ENCODE measurements at regions of chr19 and their contacts with region 1.

Region 1: GRCh38 chr19:40633207-40633606 is 32.0 kb downstream of the LTBP4 start:
- DNase-seq: no peak
- ATAC-seq: no peak
- H3K4me3 ChIP-seq: no peak overlapping the region
- H3K27ac ChIP-seq: no peak overlapping the region
- H3K4me1 ChIP-seq: no peaks in the 10 kb centered on the region
- H3K27me3 ChIP-seq: no peaks in the 10 kb centered on the region
- CTCF ChIP-seq: no peak
- EP300 ChIP-seq: no peak
- POLR2A ChIP-seq: no peak
- RAD21 ChIP-seq: no peak

Region 2: DNA sequence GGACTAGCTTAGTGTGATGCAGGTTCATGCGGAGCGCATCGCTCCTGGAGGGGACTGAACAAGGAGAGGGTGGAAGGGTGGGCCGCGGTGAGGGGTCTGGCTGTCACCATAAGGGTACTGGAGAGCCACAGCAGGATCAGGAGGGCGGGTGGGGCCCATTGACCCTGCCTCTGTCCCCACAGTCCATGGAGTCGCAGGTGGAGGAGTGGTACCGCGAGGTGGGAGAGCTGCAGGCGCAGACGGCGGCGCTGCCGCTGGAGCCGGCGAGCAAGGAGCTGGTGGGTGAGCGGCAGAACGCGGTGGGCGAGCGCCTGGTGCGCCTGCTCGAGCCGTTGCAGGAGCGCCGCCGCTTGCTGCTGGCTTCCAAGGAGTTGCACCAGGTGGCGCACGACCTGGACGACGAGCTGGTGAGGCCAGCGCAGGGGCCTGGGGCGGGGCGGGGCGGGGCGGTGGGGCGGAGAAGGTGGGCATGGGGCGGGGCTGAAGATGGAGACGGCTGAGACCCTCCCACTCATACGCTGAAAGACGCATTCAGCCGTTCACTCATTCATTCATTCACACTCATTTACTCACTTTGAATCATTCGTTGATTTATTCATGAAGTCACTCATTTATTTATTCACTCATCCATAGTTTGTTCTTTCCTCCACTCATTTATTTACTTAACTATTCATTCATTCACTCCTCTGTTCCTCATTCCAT is 84.0 kb before region 1 on chr19:
- CTCF ChIA-PET with region 1: interaction called, 28 read pairs
- POLR2A ChIA-PET with region 1: no interaction called
- RAD21 ChIA-PET with region 1: interaction called, 11 read pairs
- SMC1A ChIA-PET with region 1: interaction called, 5 read pairs
- in situ Hi-C with region 1: no loop called
- intact Hi-C with region 1: no loop called
- DNase-seq: no peak
- ATAC-seq: peak; percentile 97
- H3K4me3 ChIP-seq: no peak overlapping the region
- H3K27ac ChIP-seq: no peak overlapping the region
- H3K4me1 ChIP-seq: no peaks in the 10 kb centered on the region
- H3K27me3 ChIP-seq: peaks cover 0 to 3% of the 10 kb centered on the region in 2 experiments; a peak in 1 of 4 replicates
- CTCF ChIP-seq: peak in 2 of 3 experiments; percentile 53 to 63; a peak in 3 of 6 replicates
- EP300 ChIP-seq: no peak
- POLR2A ChIP-seq: no peak
- RAD21 ChIP-seq: peak; percentile 37

Region 3: GRCh38 chr19:40598121-40598917 is 34.9 kb before region 1 on chr19:
- CTCF ChIA-PET with region 1: interaction called, 106 read pairs
- POLR2A ChIA-PET with region 1: no interaction called
- RAD21 ChIA-PET with region 1: interaction called, 49 read pairs
- SMC1A ChIA-PET with region 1: interaction called, 5 read pairs
- in situ Hi-C with region 1: no loop called
- intact Hi-C with region 1: no loop called
- DNase-seq: no peak
- ATAC-seq: peak; percentile 84
- H3K4me3 ChIP-seq: no peak overlapping the region
- H3K27ac ChIP-seq: no peak overlapping the region
- H3K4me1 ChIP-seq: peaks cover 11% of the 10 kb centered on the region
- H3K27me3 ChIP-seq: peaks cover 11 to 14% of the 10 kb centered on the region in 2 experiments
- CTCF ChIP-seq: peak; percentile 98 to 99 (median 98); a peak in 5 of 6 replicates
- EP300 ChIP-seq: no peak
- POLR2A ChIP-seq: no peak
- RAD21 ChIP-seq: peak; percentile 98

Region 4: GRCh38 chr19:40603389-40604135 is 29.6 kb before region 1 on chr19:
- CTCF ChIA-PET with region 1: interaction called, 106 read pairs
- POLR2A ChIA-PET with region 1: interaction called, 6 read pairs
- RAD21 ChIA-PET with region 1: interaction called, 49 read pairs
- SMC1A ChIA-PET with region 1: interaction called, 35 read pairs
- in situ Hi-C with region 1: no loop called
- intact Hi-C with region 1: no loop called
- DNase-seq: peak; percentile 88
- ATAC-seq: peak; percentile 86
- H3K4me3 ChIP-seq: peak overlapping the region; percentile 56
- H3K27ac ChIP-seq: no peak overlapping the region
- H3K4me1 ChIP-seq: peaks cover 19% of the 10 kb centered on the region
- H3K27me3 ChIP-seq: peaks cover 8% of the 10 kb centered on the region in 2 experiments
- CTCF ChIP-seq: no peak
- EP300 ChIP-seq: no peak
- POLR2A ChIP-seq: peak; percentile 37; the same call in 1 of the 2 replicates
- RAD21 ChIP-seq: no peak

Region 5: GRCh38 chr19:40609561-40610395 is 23.4 kb before region 1 on chr19:
- CTCF ChIA-PET with region 1: interaction called, 106 read pairs
- POLR2A ChIA-PET with region 1: interaction called, 6 read pairs
- RAD21 ChIA-PET with region 1: interaction called, 49 read pairs
- SMC1A ChIA-PET with region 1: interaction called, 35 read pairs
- in situ Hi-C with region 1: no loop called
- intact Hi-C with region 1: no loop called
- DNase-seq: peak; percentile 70
- ATAC-seq: peak; percentile 74
- H3K4me3 ChIP-seq: peak overlapping the region; percentile 76
- H3K27ac ChIP-seq: no peak overlapping the region
- H3K4me1 ChIP-seq: peaks cover 17% of the 10 kb centered on the region
- H3K27me3 ChIP-seq: no peaks in the 10 kb centered on the region; a peak in 1 of 4 replicates
- CTCF ChIP-seq: 0 out of 6 replicates have a peak, but pooled peaks of 1 of the 3 experiments have one; percentile 0
- EP300 ChIP-seq: no peak
- POLR2A ChIP-seq: peak; percentile 71
- RAD21 ChIP-seq: no peak

Region 6: DNA sequence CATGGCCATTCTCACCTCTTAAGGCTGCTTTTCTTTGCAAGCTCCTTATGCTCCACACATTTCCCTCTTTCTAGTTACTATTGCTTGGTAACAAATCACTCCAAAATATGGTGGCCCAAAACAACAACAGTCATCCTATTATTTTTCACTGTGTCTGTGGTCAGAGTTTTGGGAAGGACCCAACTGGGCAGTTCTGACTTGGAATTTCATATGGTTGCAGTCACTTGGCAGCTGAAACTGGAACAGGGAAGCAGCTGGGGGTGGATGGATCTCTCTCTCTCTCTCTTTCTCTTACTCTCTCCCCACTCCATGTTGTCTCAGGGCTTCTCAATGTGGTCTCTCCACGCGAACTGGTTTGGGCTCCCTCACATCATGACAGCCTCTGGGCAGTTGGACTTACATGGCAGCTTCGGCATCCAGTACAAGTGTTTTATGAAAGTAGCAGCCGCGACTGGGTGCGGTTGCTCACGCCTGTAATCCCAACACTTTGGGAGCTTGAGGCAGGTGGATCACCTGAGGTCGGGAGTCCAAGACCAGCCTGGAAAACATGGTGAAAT is 17.6 kb after region 1 on chr19:
- CTCF ChIA-PET with region 1: interaction called, 33 read pairs
- POLR2A ChIA-PET with region 1: no interaction called
- RAD21 ChIA-PET with region 1: interaction called, 3 read pairs
- SMC1A ChIA-PET with region 1: interaction called, 7 read pairs
- in situ Hi-C with region 1: no loop called
- intact Hi-C with region 1: no loop called
- DNase-seq: no peak
- ATAC-seq: no peak
- H3K4me3 ChIP-seq: no peak overlapping the region
- H3K27ac ChIP-seq: no peak overlapping the region
- H3K4me1 ChIP-seq: peaks cover 10% of the 10 kb centered on the region; the same call in 1 of the 2 replicates
- H3K27me3 ChIP-seq: no peaks in the 10 kb centered on the region
- CTCF ChIP-seq: no peak
- EP300 ChIP-seq: no peak
- POLR2A ChIP-seq: no peak
- RAD21 ChIP-seq: no peak

Region 7: GRCh38 chr19:41039806-41040205 is 406.6 kb after region 1 on chr19:
- CTCF ChIA-PET with region 1: no interaction called
- POLR2A ChIA-PET with region 1: no interaction called
- RAD21 ChIA-PET with region 1: no interaction called
- SMC1A ChIA-PET with region 1: no interaction called
- in situ Hi-C with region 1: no loop called
- intact Hi-C with region 1: no loop called
- DNase-seq: no peak
- ATAC-seq: no peak
- H3K4me3 ChIP-seq: no peak overlapping the region
- H3K27ac ChIP-seq: no peak overlapping the region
- H3K4me1 ChIP-seq: no peaks in the 10 kb centered on the region
- H3K27me3 ChIP-seq: no peaks in the 10 kb centered on the region
- CTCF ChIP-seq: no peak
- EP300 ChIP-seq: no peak
- POLR2A ChIP-seq: no peak
- RAD21 ChIP-seq: no peak